ENCODE measurements at regions of chr7 and their contacts with region 1.

Region 1: DNA sequence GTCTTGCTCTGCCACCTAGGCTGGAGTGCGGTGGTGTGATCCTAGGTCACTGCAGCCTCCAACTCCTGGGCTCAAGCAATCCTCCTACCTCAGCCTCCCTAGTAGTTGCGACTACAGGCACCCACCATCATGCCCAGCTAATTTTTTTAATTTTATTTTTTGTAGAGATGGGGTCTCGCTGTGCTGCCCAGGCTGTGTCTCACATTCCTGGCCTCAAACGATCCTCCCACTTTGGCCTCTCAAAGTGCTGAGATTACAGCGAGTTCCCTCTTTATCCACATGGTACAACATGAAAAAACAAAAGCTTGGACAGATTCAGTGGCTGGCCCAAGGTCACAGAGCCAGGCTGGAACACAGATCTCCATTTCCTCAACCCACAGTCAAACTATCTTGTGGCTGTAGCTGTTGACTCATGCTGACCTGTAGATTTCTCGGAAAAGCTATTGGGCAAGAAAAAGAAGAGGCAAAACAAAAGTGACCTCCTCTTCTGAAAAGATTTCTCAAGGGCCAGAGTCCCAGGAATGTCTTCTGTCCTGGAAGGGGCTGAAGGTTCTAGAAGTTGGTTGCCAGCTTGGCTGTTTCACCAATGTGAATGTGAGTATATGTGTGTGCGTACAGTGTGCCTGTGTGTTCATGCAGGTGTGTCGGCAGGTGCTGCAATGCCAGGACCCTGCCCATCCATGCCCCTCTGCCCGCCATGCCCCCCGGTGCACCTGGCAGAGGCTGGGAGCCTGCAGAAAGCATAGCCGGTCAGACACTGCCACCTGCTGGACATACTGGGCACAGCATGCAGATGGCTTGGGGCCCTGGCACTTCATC is 28.4 kb downstream of the TMEM130 start:
- DNase-seq: peak; percentile 90
- H3K4me3 Mint-ChIP-seq: no peak overlapping the region
- H3K27ac Mint-ChIP-seq: no peak overlapping the region
- H3K4me1 Mint-ChIP-seq: peaks cover 2% of the 10 kb centered on the region
- H3K27me3 Mint-ChIP-seq: no peaks in the 10 kb centered on the region

Region 2: DNA sequence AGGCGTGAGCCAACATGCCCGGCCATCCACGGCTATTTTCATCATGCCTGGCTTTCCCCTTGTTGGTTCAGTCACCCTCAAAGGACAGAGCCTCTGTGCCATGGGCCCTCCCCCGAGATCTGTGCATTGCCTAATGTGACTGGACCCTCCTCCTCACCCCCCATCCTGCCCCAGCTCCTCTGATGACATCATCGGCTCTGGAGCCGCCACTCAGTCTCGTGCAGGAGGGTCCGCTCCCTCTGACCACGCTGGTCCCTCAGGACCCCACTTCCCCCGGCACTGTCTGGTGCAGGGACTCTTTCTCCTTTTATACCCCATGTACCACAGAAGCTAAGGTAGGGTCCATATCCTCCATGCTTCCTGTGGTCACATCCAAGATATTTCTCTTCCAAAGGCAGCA is 407.3 kb before region 1 on chr7:
- intact Hi-C with region 1: loop called (anchors 1 kb)
- DNase-seq: no peak
- H3K4me3 Mint-ChIP-seq: no peak overlapping the region
- H3K27ac Mint-ChIP-seq: no peak overlapping the region
- H3K4me1 Mint-ChIP-seq: peaks cover 5% of the 10 kb centered on the region
- H3K27me3 Mint-ChIP-seq: no peaks in the 10 kb centered on the region

Region 3: GRCh38 chr7:98745722-98746318 is 95.6 kb before region 1 on chr7:
- intact Hi-C with region 1: loop called (anchors 10 kb)
- DNase-seq: peak; percentile 90
- H3K4me3 Mint-ChIP-seq: no peak overlapping the region
- H3K27ac Mint-ChIP-seq: no peak overlapping the region
- H3K4me1 Mint-ChIP-seq: no peaks in the 10 kb centered on the region
- H3K27me3 Mint-ChIP-seq: no peaks in the 10 kb centered on the region